Dorsolateral prefrontal cortex (tissue), 120 donors: ENCODE measurements at regions of chr7 and their contacts with region 1.

Region 1: GRCh38 chr7:134553976-134554375 is 5.1 kb downstream of the AKR1B15 start:
- DNase-seq: no peak
- H3K4me3 ChIP-seq: no peak overlapping the region
- H3K27ac ChIP-seq: no peak overlapping the region
- H3K27me3 ChIP-seq: no peaks in the 10 kb centered on the region
- CTCF ChIP-seq: no peak

Region 2: DNA sequence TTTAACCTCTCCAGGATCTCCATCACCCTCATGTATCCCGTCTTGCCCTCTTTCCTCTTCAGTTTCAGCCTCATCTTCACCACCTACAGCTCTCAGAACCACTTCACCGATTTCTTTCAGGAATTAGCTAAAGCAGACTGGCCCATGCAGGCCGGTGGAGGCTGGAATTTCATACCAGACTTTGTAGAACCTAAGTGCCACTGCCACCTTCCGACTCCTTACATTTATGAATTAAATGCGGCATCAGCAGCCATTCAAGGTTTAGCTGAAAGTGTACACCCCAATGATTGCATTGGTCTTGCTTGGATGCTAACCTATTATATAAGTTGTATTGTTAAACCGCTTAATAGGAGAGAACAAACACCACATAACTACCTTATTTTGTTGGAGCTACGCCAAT is 62.0 kb before region 1 on chr7:
- intact Hi-C with region 1: no loop called
- DNase-seq: no peak
- H3K4me3 ChIP-seq: no peak overlapping the region
- H3K27ac ChIP-seq: no peak overlapping the region
- H3K27me3 ChIP-seq: peaks cover 0 to 2% (median 0%) of the 10 kb centered on the region in 45 donors
- CTCF ChIP-seq: no peak

Region 3: DNA sequence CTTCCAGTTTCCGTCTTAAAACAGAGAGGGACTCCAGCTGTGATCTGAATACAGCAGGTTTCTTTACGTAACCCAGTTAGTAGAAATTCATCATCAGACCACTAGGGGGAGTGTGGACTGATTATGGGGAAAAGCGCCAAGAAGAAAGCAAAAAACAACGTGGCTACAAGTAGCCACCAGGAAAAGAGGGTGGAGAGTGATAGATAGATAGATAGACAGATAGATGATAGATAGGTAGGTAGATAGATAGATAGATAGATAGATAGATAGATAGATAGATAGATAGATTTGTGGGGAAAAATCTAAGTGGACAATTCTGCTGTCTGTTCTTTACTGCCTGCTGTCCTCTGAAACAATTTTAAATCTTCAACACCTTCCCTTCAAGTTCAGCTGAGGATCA is 39.3 kb before region 1 on chr7:
- intact Hi-C with region 1: loop called in 1 of 2 experiments (anchors 5 kb)
- DNase-seq: peak in 1 of 10 donors; percentile 11
- H3K4me3 ChIP-seq: no peak overlapping the region
- H3K27ac ChIP-seq: no peak overlapping the region
- H3K27me3 ChIP-seq: no peaks in the 10 kb centered on the region
- CTCF ChIP-seq: peak; percentile 71 to 92 (median 86)

Region 4: GRCh38 chr7:134593530-134594392 is 39.8 kb after region 1 on chr7:
- intact Hi-C with region 1: loop called in 1 of 2 experiments (anchors 2 kb)
- DNase-seq: peak; percentile 18 to 95 (median 80)
- H3K4me3 ChIP-seq: no peak overlapping the region
- H3K27ac ChIP-seq: peak overlapping the region; percentile 66 to 98 (median 93)
- H3K27me3 ChIP-seq: no peaks in the 10 kb centered on the region
- CTCF ChIP-seq: peak in 18 of 56 donors; percentile 8 to 43 (median 18)